ENCODE measurements at regions of chr16 and their contacts with region 1.

Region 1: DNA sequence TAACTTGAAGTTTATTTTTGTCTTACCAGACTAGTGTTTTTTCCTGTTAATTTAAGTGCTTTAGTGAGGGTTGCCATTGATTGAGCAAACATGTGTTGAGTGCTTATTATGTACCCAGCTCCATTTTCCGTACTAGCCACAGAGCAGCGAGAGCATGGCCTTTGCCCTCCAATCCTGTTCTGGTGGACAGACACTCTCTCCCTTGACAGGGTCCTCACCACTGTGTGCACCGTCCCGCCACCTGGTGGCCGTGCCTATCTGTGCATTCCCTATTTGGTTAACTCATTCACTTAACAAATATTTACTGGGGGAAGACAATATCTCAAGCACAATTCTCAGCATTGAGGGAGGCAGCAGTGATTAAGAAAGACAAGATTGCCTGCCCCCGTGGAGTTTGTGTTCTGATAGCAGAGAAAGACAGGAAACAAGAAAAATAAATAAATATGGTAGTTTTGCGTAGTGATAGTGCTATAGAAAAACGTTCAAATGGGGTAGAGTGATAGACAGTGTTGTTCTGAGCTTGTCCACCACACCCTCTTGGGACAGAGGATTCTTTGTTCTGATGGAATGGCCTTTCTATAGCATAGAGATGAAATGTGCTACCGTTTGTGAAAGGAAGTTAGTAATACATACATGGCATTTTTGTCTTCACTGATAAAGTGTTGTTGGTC is 13.0 kb downstream of the CDH13 start:
- DNase-seq: peak; percentile 35
- H3K4me3 Mint-ChIP-seq: no peak overlapping the region
- H3K27ac Mint-ChIP-seq: no peak overlapping the region
- H3K4me1 Mint-ChIP-seq: peaks cover 32% of the 10 kb centered on the region
- H3K27me3 Mint-ChIP-seq: peaks cover 2% of the 10 kb centered on the region

Region 2: GRCh38 chr16:82671741-82672140 is 31.9 kb after region 1 on chr16:
- intact Hi-C with region 1: loop called (anchors 2 kb)
- DNase-seq: no peak
- H3K4me3 Mint-ChIP-seq: no peak overlapping the region
- H3K27ac Mint-ChIP-seq: no peak overlapping the region
- H3K4me1 Mint-ChIP-seq: no peaks in the 10 kb centered on the region
- H3K27me3 Mint-ChIP-seq: peaks cover 24% of the 10 kb centered on the region

Region 3: GRCh38 chr16:82699711-82700495 is 60.1 kb after region 1 on chr16:
- intact Hi-C with region 1: no loop called
- DNase-seq: no peak
- H3K4me3 Mint-ChIP-seq: no peak overlapping the region
- H3K27ac Mint-ChIP-seq: no peak overlapping the region
- H3K4me1 Mint-ChIP-seq: peaks cover 30% of the 10 kb centered on the region
- H3K27me3 Mint-ChIP-seq: peaks cover 7% of the 10 kb centered on the region

Measured in activated T-helper 2 cell treated with anti-CD3 and anti-CD28 coated beads, Interferon-gamma antibody, Interleukin-2, Interleukin-4, amounts not matched to agents 10 μg/mL and 5 μg/mL and 100 μg/mL, durations not matched to agents 14 hours and 24 hours and 36 hours (primary cell).